ENCODE measurements at regions of chr19 and their contacts with region 1.

Region 1: GRCh38 chr19:52296773-52297600 is at the start of gene ZNF480:
- DNase-seq: peak; percentile 67 to 84 (median 79)
- H3K4me3 ChIP-seq: peak within 1 kb of the TSS; percentile 58 to 96 (median 85)
- H3K27ac ChIP-seq: peak within 1 kb of the TSS in 58 of 59 donors; percentile 30 to 94 (median 88)
- H3K27me3 ChIP-seq: no peaks in the 10 kb centered on the region
- CTCF ChIP-seq: peak in 10 of 56 donors; percentile 0 to 31 (median 18)
- total RNA-seq, gene ZNF480: 3.2 to 11.3 (median 6.9) TPM

Region 2: GRCh38 chr19:52269338-52270261 is 27.4 kb before region 1 on chr19 and contains the start of gene ZNF766:
- intact Hi-C with region 1: loop called in 1 of 2 experiments (anchors 1 kb)
- DNase-seq: peak; percentile 93 to 98 (median 96)
- H3K4me3 ChIP-seq: peak within 1 kb of the TSS; percentile 70 to 100 (median 95)
- H3K27ac ChIP-seq: peak within 1 kb of the TSS in 58 of 59 donors; percentile 25 to 96 (median 84)
- H3K27me3 ChIP-seq: no peaks in the 10 kb centered on the region
- CTCF ChIP-seq: peak in 30 of 56 donors; percentile 5 to 52 (median 26)
- total RNA-seq, gene ZNF766: 10.8 to 24.9 (median 15.6) TPM

Region 3: DNA sequence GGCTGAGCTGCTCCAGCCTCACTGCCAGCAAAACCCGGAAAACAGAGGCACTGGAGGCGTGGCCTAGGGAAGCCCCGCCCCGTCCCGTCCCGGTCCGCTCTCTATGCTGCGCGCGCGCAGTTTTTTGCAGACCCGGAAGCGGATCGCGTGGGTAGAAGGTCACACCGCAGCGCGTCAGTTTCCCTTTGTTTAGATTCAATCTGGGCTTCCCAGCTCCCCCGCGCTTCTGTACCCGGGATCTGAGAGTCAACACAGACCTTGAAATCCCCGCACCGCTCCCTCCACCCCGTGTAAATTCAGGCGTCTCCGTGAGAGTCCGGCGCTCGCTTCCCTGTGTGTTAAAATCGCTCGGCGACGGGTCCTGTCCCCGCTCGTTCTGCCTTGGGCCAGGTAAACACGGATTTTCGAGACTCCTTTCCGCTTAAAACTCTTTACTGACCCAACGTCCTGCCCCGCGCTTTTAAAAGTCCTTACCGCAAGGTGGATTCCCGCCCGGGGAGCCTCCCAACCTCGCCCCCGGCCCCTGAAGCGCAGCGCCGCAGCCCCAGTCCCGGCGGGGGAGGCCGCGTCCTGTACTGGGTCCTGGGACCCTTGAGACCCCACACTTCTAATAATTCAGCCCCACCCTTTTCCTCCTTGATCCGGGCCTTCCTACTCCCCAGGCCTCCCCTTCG is 39.3 kb after region 1 on chr19 and contains the start of gene ZNF610:
- intact Hi-C with region 1: loop called (anchors 2 to 5 kb)
- DNase-seq: peak; percentile 84 to 96 (median 90)
- H3K4me3 ChIP-seq: peak within 1 kb of the TSS; percentile 55 to 97 (median 85)
- H3K27ac ChIP-seq: peak within 1 kb of the TSS in 54 of 59 donors; percentile 34 to 91 (median 78)
- H3K27me3 ChIP-seq: no peaks in the 10 kb centered on the region
- CTCF ChIP-seq: peak in 10 of 56 donors; percentile 17 to 42 (median 26)
- total RNA-seq, gene ZNF610: 4.9 to 19.2 (median 10.9) TPM

Measured in dorsolateral prefrontal cortex (tissue), 120 donors.